CD8-positive, alpha-beta T cell (primary cell): ENCODE measurements at regions of chr19 and their contacts with region 1.

Region 1: GRCh38 chr19:47273313-47273977 is 1.2 kb upstream of the INAFM1 start:
- DNase-seq: peak; percentile 77 to 93 (median 89)
- ATAC-seq: peak; percentile 56
- H3K4me3 ChIP-seq: peak overlapping the region; percentile 94 to 99
- H3K4me3 Mint-ChIP-seq: peak overlapping the region; percentile 98
- H3K27ac ChIP-seq: peak overlapping the region; percentile 96 to 97
- H3K27ac Mint-ChIP-seq: peak overlapping the region; percentile 97
- H3K4me1 ChIP-seq: peaks cover 18% of the 10 kb centered on the region
- H3K4me1 Mint-ChIP-seq: peaks cover 19% of the 10 kb centered on the region
- H3K27me3 ChIP-seq: no peaks in the 10 kb centered on the region
- H3K27me3 Mint-ChIP-seq: no peaks in the 10 kb centered on the region
- CTCF ChIP-seq: no peak

Region 2: DNA sequence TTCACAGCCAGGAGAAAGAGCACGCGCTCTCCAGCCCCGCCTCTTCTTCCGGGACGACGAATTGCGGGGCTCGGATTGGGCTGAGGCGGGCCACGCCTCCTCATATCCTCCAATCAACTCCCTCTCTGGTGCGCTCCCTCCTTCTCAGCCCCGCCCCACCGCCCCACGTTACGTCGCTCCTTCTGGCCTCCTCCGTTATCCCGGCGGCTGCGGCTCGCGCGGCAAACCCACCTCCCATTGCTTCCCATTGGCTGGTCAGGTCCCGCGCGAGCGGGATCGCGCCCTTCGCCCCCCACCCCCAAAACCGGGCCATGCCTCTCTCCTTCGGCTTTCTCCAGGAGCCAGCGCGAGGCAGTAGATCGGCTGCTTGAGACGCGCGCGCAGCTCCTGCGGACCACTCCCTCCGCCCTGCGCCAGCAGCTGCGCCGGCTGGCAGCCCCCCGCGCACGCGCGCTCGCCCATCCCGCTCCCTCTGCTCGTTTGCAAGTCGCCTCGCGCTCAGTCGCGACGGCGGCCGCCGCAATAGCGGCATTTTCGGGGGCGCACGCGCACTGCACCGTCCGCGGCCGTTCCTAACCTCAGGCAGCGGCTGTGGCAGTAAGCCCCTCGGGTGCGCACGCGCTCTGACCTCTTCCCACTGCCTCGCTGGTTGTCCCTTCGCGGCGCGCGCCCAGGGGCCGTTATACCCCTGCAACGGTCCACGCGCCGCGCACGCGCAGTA is 413.2 kb before region 1 on chr19:
- CTCF ChIA-PET with region 1: no interaction called
- POLR2A ChIA-PET with region 1: no interaction called
- intact Hi-C with region 1: loop called (anchors 2 to 5 kb)
- DNase-seq: peak; percentile 82 to 98 (median 93)
- ATAC-seq: peak; percentile 80
- H3K4me3 ChIP-seq: peak overlapping the region; percentile 84 to 91
- H3K4me3 Mint-ChIP-seq: peak overlapping the region; percentile 92
- H3K27ac ChIP-seq: peak overlapping the region; percentile 77 to 87
- H3K27ac Mint-ChIP-seq: peak overlapping the region; percentile 94
- H3K4me1 ChIP-seq: peaks cover 44% of the 10 kb centered on the region
- H3K4me1 Mint-ChIP-seq: peaks cover 17% of the 10 kb centered on the region
- H3K27me3 ChIP-seq: no peaks in the 10 kb centered on the region
- H3K27me3 Mint-ChIP-seq: no peaks in the 10 kb centered on the region
- CTCF ChIP-seq: no peak

Region 3: GRCh38 chr19:47089767-47090350 is 183.6 kb before region 1 on chr19:
- CTCF ChIA-PET with region 1: no interaction called
- POLR2A ChIA-PET with region 1: no interaction called
- intact Hi-C with region 1: no loop called
- DNase-seq: no peak
- ATAC-seq: no peak
- H3K4me3 ChIP-seq: no peak overlapping the region
- H3K4me3 Mint-ChIP-seq: no peak overlapping the region
- H3K27ac ChIP-seq: no peak overlapping the region
- H3K27ac Mint-ChIP-seq: no peak overlapping the region
- H3K4me1 ChIP-seq: peaks cover 13% of the 10 kb centered on the region
- H3K4me1 Mint-ChIP-seq: peaks cover 15% of the 10 kb centered on the region
- H3K27me3 ChIP-seq: no peaks in the 10 kb centered on the region
- H3K27me3 Mint-ChIP-seq: no peaks in the 10 kb centered on the region
- CTCF ChIP-seq: no peak

Region 4: GRCh38 chr19:47190167-47190727 is 83.2 kb before region 1 on chr19:
- CTCF ChIA-PET with region 1: no interaction called
- POLR2A ChIA-PET with region 1: interaction called, 13 read pairs
- intact Hi-C with region 1: no loop called
- DNase-seq: peak in 8 of 9 experiments; percentile 18 to 80 (median 59)
- ATAC-seq: peak; percentile 39
- H3K4me3 ChIP-seq: no peak overlapping the region
- H3K4me3 Mint-ChIP-seq: peak overlapping the region; percentile 38
- H3K27ac ChIP-seq: peak overlapping the region in 1 of 2 experiments; percentile 9
- H3K27ac Mint-ChIP-seq: peak overlapping the region; percentile 94
- H3K4me1 ChIP-seq: peaks cover 70% of the 10 kb centered on the region
- H3K4me1 Mint-ChIP-seq: peaks cover 65% of the 10 kb centered on the region
- H3K27me3 ChIP-seq: no peaks in the 10 kb centered on the region
- H3K27me3 Mint-ChIP-seq: no peaks in the 10 kb centered on the region
- CTCF ChIP-seq: no peak

Region 5: DNA sequence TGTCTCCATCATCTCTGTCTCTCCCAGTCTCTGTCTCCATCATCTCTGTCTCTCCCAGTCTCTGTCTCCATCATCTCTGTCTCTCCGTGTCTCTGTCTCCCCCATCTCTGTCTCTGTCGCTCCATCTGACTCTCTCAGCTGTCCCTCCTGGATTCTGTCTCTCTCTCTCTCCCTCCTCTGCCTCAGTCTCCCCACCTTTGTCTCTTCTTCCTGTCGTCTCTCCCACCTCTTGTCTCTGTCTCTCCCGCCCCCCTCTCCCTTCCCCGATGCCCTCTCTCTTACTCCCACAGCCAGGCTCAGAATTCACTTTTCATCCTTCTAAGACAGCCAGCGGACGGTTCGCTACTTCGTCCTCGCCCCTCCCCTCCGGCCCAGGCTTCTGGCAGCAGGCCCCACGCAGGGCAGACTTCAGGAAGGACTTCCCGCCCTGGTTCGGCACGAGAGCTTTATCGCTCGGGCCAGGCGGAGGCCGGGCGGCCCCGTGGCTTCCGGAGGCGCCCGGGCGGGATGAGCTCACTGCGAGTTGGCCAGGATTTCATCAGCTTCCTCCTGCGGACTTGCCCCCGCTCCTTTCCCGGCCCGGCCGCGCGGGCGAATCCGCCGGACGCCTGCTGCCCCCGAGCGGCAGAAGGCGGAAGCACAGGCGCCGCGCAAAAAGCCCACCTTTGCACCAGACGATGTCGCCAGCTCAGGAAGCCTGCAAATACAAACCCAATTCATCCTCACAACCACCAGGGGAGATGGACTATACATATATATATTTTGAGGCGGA is 29.5 kb before region 1 on chr19:
- CTCF ChIA-PET with region 1: interaction called, 12 read pairs
- POLR2A ChIA-PET with region 1: no interaction called
- intact Hi-C with region 1: no loop called
- DNase-seq: peak; percentile 81 to 96 (median 88)
- ATAC-seq: peak; percentile 52
- H3K4me3 ChIP-seq: peak overlapping the region; percentile 27 to 40
- H3K4me3 Mint-ChIP-seq: peak overlapping the region; percentile 65
- H3K27ac ChIP-seq: peak overlapping the region; percentile 18 to 62
- H3K27ac Mint-ChIP-seq: peak overlapping the region; percentile 75
- H3K4me1 ChIP-seq: peaks cover 47% of the 10 kb centered on the region
- H3K4me1 Mint-ChIP-seq: peaks cover 36% of the 10 kb centered on the region
- H3K27me3 ChIP-seq: no peaks in the 10 kb centered on the region
- H3K27me3 Mint-ChIP-seq: no peaks in the 10 kb centered on the region
- CTCF ChIP-seq: peak; percentile 98

Region 6: GRCh38 chr19:47514869-47515588 is 241.6 kb after region 1 on chr19 and contains the start of gene NAPA:
- CTCF ChIA-PET with region 1: no interaction called
- POLR2A ChIA-PET with region 1: interaction called, 4 read pairs
- intact Hi-C with region 1: loop called in 1 of 2 experiments (anchors 10 kb)
- DNase-seq: peak; percentile 100
- ATAC-seq: peak; percentile 94
- H3K4me3 ChIP-seq: peak within 1 kb of the TSS; percentile 84 to 100
- H3K4me3 Mint-ChIP-seq: peak within 1 kb of the TSS; percentile 97
- H3K27ac ChIP-seq: peak within 1 kb of the TSS; percentile 93 to 100
- H3K27ac Mint-ChIP-seq: peak within 1 kb of the TSS; percentile 98
- H3K4me1 ChIP-seq: peaks cover 82% of the 10 kb centered on the region
- H3K4me1 Mint-ChIP-seq: peaks cover 88% of the 10 kb centered on the region
- H3K27me3 ChIP-seq: no peaks in the 10 kb centered on the region
- H3K27me3 Mint-ChIP-seq: no peaks in the 10 kb centered on the region
- CTCF ChIP-seq: no peak
- total RNA-seq, gene NAPA: 172 to 188 TPM

Region 7: DNA sequence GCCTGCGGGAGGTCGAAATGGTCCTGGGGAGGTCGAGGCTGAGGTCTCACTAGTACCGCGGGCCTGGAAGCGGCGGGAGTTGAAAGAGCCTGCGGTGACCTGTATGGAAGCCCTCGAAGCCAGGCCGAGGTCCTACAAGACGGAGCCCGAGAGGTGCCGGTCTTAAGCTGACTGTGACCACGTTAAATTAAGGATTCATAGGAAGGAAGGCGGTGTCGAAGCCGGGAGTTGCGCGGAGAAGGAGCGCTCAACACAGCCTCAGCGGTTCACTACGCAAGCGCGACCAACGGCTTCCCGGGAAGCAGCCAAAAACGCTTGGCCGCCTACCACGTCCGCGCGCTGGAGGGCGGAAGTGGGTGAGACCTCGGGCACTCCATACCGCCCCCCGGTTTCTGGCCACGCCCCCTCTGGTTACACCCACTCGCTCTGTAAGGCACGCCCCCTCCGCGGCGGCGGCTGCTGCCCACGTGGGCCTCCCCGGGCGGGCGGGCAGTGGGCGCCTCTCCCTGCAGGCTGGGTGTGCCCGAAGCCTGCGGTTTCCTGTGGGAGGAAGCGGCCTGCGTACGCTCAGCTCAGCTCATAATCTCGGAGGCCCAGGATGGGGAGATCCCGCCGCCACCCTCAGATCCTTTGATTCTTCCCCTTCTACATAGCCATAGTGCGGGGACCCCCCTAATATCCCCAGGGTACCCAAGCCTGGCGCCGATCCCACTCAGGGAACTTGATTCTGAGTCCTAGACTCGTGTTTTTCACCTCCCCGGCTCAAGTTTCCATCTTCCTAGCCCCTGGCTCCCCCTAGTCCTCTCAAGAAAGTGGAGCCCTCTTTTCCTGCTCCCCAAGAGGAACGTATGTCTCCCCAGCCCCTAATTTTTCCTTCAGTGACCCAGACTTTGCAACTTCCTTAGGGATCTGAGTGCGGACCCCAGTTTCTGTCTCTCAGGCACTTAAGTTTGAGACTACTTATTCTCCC is 1048.5 kb after region 1 on chr19:
- CTCF ChIA-PET with region 1: no interaction called
- POLR2A ChIA-PET with region 1: no interaction called
- intact Hi-C with region 1: loop called in 1 of 2 experiments (anchors 5 kb)
- DNase-seq: peak; percentile 99 to 100 (median 100)
- ATAC-seq: peak; percentile 68
- H3K4me3 ChIP-seq: peak overlapping the region; percentile 76 to 78
- H3K4me3 Mint-ChIP-seq: peak overlapping the region; percentile 94
- H3K27ac ChIP-seq: peak overlapping the region; percentile 87 to 99
- H3K27ac Mint-ChIP-seq: peak overlapping the region; percentile 100
- H3K4me1 ChIP-seq: peaks cover 54% of the 10 kb centered on the region
- H3K4me1 Mint-ChIP-seq: peaks cover 60% of the 10 kb centered on the region
- H3K27me3 ChIP-seq: no peaks in the 10 kb centered on the region
- H3K27me3 Mint-ChIP-seq: no peaks in the 10 kb centered on the region
- CTCF ChIP-seq: no peak